BJ (cell line): ENCODE measurements at regions of chr4 and their contacts with region 1.

Region 1: DNA sequence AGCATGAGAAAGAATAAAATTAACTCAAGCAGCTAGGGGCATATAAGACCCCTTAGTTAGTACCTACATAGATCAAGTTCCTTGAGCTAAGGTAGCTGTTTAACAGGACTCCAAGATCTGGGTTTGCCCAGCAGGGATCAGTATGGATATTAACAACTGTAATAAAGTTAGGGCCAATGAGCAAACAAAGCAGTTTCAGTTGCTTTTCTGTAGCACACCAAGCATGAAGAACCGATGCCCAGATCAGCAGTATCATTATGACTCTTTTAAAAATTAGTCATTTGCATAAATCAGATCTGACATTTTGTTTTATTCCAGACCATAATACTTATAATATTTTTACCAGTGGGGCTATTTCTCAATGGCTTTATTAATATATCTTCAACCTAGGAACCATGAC is 80.9 kb downstream of the C4orf33 start:
- DNase-seq: no peak
- H3K4me3 ChIP-seq: no peak overlapping the region
- H3K27me3 ChIP-seq: no peaks in the 10 kb centered on the region
- CTCF ChIP-seq: no peak

Region 2: DNA sequence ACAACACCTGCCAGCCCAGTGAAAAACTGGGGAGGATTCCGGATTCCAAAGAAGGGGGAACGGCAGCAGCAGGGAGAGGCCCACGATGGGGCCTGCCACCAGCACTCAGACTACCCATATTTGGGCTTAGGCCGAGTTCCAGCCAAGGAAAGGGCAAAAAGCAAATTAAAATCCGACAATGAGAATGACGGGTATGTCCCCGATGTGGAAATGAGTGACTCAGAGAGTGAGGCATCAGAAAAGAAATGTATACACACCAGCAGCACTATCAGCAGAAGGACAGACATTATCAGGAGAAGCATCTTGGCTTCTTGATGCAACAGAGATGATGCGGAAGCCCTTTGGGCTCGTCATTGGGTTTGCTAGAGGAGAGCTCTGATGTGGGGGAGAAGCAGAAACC is 304.9 kb before region 1 on chr4:
- CTCF ChIA-PET with region 1: no interaction called
- POLR2A ChIA-PET with region 1: interaction called, 14 read pairs
- DNase-seq: no peak
- H3K4me3 ChIP-seq: no peak overlapping the region
- H3K27me3 ChIP-seq: no peaks in the 10 kb centered on the region
- CTCF ChIP-seq: no peak

Region 3: GRCh38 chr4:129144755-129145206 is 32.1 kb before region 1 on chr4:
- CTCF ChIA-PET with region 1: no interaction called
- POLR2A ChIA-PET with region 1: no interaction called
- DNase-seq: no peak
- H3K4me3 ChIP-seq: no peak overlapping the region
- H3K27me3 ChIP-seq: no peaks in the 10 kb centered on the region; the same call in 1 of the 2 replicates
- CTCF ChIP-seq: no peak

Region 4: DNA sequence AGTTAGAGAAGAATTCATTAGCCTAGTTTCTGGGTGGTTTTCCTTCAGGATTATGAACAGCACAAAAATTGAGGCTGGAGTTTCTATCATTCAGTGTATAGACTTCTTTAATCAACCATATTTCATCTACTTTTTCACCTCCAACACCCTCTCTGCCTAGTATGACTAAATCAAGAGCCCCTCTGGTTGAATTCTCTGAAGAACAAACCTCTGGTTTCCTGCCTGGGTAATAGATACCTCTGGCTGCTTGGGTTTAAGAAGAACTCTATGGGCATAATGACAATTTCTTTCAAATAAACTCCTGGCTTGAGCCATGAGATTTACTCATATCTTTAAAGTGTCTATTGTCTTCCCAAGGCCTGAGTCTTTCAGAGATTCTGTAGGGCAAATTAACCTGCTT is 14.4 kb before region 1 on chr4:
- CTCF ChIA-PET with region 1: no interaction called
- POLR2A ChIA-PET with region 1: no interaction called
- DNase-seq: no peak
- H3K4me3 ChIP-seq: no peak overlapping the region
- H3K27me3 ChIP-seq: no peaks in the 10 kb centered on the region
- CTCF ChIP-seq: no peak